ENCODE measurements at regions of chr1 and their contacts with region 1.

Region 1: GRCh38 chr1:160858097-160858496 is 4.6 kb downstream of the CD244 start:
- DNase-seq: no peak
- ATAC-seq: no peak
- H3K4me3 ChIP-seq: no peak overlapping the region
- H3K27ac ChIP-seq: no peak overlapping the region
- H3K4me1 ChIP-seq: no peaks in the 10 kb centered on the region
- H3K27me3 ChIP-seq: 0 out of 2 replicates have a peak, but pooled peaks cover 2% of the 10 kb centered on the region
- CTCF ChIP-seq: no peak

Region 2: GRCh38 chr1:161013488-161014230 is 155.6 kb after region 1 on chr1:
- CTCF ChIA-PET with region 1: no interaction called
- POLR2A ChIA-PET with region 1: interaction called, 10 read pairs
- in situ Hi-C with region 1: no loop called
- intact Hi-C with region 1: no loop called
- DNase-seq: no peak
- ATAC-seq: peak; percentile 88
- H3K4me3 ChIP-seq: peak overlapping the region; percentile 20 to 43
- H3K27ac ChIP-seq: peak overlapping the region; percentile 81
- H3K4me1 ChIP-seq: peaks cover 21% of the 10 kb centered on the region
- H3K27me3 ChIP-seq: no peaks in the 10 kb centered on the region
- CTCF ChIP-seq: no peak

Region 3: DNA sequence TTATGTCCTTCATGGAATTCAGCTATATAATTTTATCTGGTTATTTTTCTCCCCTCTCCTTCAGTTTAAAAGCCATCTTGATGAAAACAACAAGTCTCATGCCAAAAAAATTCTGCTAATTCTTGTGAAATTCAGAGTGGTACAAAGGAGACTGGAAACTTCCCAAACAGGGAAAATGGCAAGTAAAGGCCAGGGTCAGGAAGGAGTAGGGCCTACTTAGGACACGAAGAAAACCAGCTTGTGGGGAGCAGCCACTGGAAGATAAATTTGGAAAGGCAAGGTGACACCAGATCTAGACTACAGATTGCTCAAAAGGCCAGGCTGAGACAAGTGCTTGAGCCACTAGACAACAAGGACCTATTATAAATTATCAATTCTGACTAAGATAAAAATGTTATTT is 174.3 kb after region 1 on chr1:
- CTCF ChIA-PET with region 1: no interaction called
- POLR2A ChIA-PET with region 1: no interaction called
- in situ Hi-C with region 1: no loop called
- intact Hi-C with region 1: no loop called
- DNase-seq: no peak
- ATAC-seq: no peak
- H3K4me3 ChIP-seq: no peak overlapping the region
- H3K27ac ChIP-seq: no peak overlapping the region; the same call in 1 of the 2 replicates
- H3K4me1 ChIP-seq: peaks cover 2% of the 10 kb centered on the region; the same call in 1 of the 2 replicates
- H3K27me3 ChIP-seq: no peaks in the 10 kb centered on the region
- CTCF ChIP-seq: no peak

Measured in Panc1 (cell line).